Ascending aorta (tissue), 2 donors: ENCODE measurements at regions of chr13 and their contacts with region 1.

Region 1: GRCh38 chr13:109869312-109870237 is 83.2 kb upstream of the IRS2 start:
- DNase-seq: peak in 1 of 2 donors; percentile 85
- H3K4me3 ChIP-seq: peak overlapping the region; percentile 39 to 57
- H3K27ac ChIP-seq: peak overlapping the region; percentile 41 to 61
- H3K4me1 ChIP-seq: peaks cover 0 to 22% of the 10 kb centered on the region in 2 donors
- H3K27me3 ChIP-seq: no peaks in the 10 kb centered on the region
- CTCF ChIP-seq: peak in 2 of 3 experiments; percentile 33 to 43

Region 2: DNA sequence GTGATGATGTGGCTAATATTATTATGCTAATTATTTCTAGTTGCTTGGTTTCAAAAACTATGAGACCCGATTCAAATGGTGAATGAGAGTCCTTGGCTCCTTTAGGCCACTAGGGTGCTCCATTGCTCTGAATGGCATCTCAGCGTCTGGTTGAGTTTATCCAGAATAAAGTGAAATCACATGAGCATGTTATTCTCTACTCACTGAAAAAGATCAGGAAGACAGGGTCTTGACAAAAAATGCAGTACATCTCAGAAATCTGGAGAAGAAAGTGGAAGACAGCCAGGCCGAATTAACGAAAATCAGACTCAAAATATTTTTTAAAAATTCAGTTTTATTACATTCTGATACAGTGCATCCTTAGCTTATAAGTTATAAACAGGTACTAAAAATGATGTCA is 723.9 kb before region 1 on chr13:
- intact Hi-C with region 1: loop called (anchors 10 kb)
- DNase-seq: no peak
- H3K4me3 ChIP-seq: no peak overlapping the region
- H3K27ac ChIP-seq: no peak overlapping the region
- H3K4me1 ChIP-seq: peaks cover 0 to 2% of the 10 kb centered on the region in 2 donors
- H3K27me3 ChIP-seq: peaks cover 2% of the 10 kb centered on the region
- CTCF ChIP-seq: peak; percentile 69 to 86 (median 79)

Region 3: GRCh38 chr13:109256866-109257760 is 612.5 kb before region 1 on chr13:
- intact Hi-C with region 1: loop called (anchors 10 kb)
- DNase-seq: peak in 1 of 2 donors; percentile 80
- H3K4me3 ChIP-seq: no peak overlapping the region
- H3K27ac ChIP-seq: peak overlapping the region; percentile 55 to 56
- H3K4me1 ChIP-seq: peaks cover 3% of the 10 kb centered on the region in 2 donors
- H3K27me3 ChIP-seq: no peaks in the 10 kb centered on the region
- CTCF ChIP-seq: no peak

Region 4: DNA sequence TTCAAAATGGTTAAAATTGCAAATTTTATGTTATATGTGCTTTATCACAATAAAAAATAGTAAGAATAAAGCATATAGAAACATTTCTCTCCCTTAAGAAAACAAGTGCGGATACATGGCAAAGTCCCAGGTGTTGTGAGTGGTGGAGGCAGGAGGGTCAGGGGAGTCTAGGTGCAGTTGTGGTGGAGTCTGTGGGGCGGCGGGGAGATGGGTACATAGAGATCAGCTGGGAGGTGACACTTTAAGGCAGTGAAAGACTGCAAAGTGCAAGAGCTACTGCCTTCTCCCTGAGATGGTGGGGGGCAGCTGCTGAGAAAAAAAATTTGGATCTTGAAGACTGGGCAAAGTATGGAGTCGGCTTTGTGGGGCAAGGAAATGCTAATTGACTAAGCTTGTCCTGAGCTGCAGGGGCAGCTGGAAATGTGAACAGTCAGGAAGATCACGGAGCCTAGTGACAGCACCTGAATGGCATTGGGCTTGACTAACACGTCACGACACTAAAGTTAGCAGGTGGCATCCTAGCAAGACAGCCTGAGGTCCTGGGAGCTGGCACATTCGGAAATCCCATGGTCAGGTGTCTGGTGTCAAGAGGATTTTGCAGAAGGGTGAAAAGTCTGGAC is 10.2 kb before region 1 on chr13:
- intact Hi-C with region 1: no loop called
- DNase-seq: no peak
- H3K4me3 ChIP-seq: no peak overlapping the region
- H3K27ac ChIP-seq: no peak overlapping the region
- H3K4me1 ChIP-seq: no peaks in the 10 kb centered on the region
- H3K27me3 ChIP-seq: no peaks in the 10 kb centered on the region
- CTCF ChIP-seq: no peak

Region 5: DNA sequence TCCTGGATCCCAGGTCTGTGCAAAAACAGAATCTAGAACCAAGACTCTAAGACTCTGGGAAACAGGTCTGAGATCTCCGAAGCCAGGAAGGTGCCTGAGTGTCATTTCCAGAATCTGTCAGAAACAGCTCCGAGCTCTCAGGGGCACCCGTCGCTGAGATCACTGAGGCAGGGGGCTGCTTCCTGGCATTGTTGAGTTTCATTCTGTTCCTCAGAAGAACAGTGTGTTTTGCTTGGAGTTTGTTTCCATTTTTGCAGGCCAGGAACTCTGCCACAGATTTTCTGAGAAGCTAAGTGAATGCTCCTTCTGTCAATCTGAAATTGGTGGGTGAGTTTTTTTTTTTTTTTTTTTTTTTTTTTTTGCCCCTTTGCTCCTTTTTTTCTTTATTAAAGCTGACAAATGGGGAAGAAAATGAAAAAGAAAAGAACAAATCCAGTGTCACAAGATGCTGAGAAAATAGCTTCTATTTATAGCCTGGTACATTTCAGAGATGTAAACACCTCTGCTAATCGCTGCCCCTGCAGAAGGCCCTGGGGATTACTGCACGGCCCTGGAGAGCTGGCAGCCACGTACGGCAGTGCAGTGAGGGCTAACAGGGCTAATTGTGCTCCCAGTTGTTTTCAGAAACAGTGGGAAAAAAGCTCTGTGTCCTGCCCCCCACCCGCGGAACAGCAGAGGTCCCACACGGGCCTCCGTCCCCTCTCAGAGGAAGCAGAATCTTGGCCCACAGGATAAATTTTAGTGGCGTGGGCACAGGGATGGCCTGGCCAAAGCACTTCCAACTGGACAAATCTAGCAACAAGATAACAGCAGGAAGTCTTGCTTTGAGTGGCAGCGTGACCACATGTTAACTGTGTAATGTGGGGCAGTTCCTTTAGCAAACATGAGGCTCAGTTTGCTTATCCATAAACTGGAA is 154.4 kb after region 1 on chr13:
- intact Hi-C with region 1: loop called (anchors 2 kb)
- DNase-seq: peak; percentile 30 to 82
- H3K4me3 ChIP-seq: peak overlapping the region in 1 of 2 donors; percentile 34
- H3K27ac ChIP-seq: peak overlapping the region; percentile 84
- H3K4me1 ChIP-seq: peaks cover 10 to 23% of the 10 kb centered on the region in 2 donors
- H3K27me3 ChIP-seq: no peaks in the 10 kb centered on the region
- CTCF ChIP-seq: no peak